Activated CD4-positive, alpha-beta T cell treated with anti-CD3 and anti-CD28 coated beads, Interleukin-2, amount 10 ng/mL, durations not matched to agents 24 days and 14 days (primary cell): ENCODE measurements at regions of chr9 and their contacts with region 1.

Region 1: DNA sequence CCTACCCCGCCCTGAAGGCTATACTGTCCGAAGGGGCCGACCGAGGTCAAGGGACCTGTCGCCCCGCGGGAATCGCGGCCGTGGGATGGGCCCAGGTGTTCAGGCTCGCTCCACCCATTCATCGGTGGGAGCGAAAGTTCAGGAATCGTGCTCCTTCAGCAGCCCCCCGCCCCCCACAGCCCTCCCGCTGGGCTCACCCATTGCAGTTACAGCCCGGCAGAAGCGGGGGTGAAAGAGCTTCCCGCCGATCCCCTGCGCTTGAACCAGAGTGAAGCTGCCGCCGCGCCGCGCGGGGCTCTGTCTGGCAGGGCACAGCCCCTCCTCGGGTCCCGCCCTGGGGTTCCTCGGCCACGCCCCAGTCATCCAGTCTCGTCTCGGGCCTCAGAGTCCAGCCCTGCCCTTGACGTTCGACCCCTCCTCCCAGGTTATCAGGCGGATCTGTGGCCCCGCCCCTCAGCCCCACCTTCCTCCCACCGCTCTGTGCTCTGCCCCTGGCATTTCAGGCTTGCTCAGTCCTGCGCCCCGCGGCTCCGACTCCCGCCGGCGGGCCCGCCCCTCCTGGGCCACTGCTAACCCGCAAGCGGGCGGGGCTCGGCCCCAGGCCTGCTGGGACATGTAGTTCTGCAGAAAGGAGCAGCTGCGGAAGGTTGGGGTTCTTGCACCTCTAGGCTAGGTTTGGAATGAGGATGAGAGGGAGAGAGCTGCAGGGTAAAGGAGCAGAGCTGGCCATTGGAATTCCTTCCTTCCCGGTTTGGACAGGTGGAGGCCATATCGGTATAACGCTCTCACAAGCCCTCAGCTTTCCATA is at the start of gene MYORG:
- DNase-seq: peak; percentile 99
- H3K4me3 Mint-ChIP-seq: peak within 1 kb of the TSS; percentile 89
- H3K27ac Mint-ChIP-seq: peak within 1 kb of the TSS; percentile 78
- H3K4me1 Mint-ChIP-seq: peaks cover 41% of the 10 kb centered on the region
- H3K27me3 Mint-ChIP-seq: peaks cover 4% of the 10 kb centered on the region
- total RNA-seq, gene MYORG: 1.4 TPM in 2 replicates

Region 2: GRCh38 chr9:34048923-34049697 is 327.7 kb before region 1 on chr9:
- intact Hi-C with region 1: loop called (anchors 1 kb)
- DNase-seq: peak; percentile 99
- H3K4me3 Mint-ChIP-seq: peak overlapping the region; percentile 96
- H3K27ac Mint-ChIP-seq: peak overlapping the region; percentile 99
- H3K4me1 Mint-ChIP-seq: peaks cover 41% of the 10 kb centered on the region
- H3K27me3 Mint-ChIP-seq: peaks cover 3% of the 10 kb centered on the region

Region 3: DNA sequence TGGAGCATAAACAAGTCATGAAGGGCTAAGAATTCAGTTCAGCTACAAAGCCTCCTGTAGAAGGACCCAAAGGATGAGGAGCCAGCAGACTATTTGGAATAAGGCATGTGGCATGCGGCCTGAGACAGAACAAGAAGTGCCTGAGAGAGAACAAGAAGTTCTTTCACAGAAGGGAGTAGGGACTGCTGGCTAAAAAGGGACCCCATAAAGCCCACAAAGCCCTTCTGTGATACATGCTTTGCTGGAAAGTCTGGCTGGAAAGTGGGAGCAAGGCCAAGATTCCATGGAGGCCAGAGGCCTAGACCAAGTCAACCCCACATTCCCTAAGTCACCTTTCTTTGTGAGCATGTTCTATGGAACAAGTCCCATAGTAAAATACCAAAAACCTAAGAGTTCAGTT is 292.2 kb before region 1 on chr9:
- intact Hi-C with region 1: no loop called
- DNase-seq: no peak
- H3K4me3 Mint-ChIP-seq: no peak overlapping the region
- H3K27ac Mint-ChIP-seq: no peak overlapping the region
- H3K4me1 Mint-ChIP-seq: peaks cover 12% of the 10 kb centered on the region
- H3K27me3 Mint-ChIP-seq: no peaks in the 10 kb centered on the region

Region 4: GRCh38 chr9:34126207-34127034 is 250.4 kb before region 1 on chr9 and contains the start of gene DCAF12:
- intact Hi-C with region 1: loop called (anchors 2 kb)
- DNase-seq: peak; percentile 98
- H3K4me3 Mint-ChIP-seq: peak within 1 kb of the TSS; percentile 92
- H3K27ac Mint-ChIP-seq: peak within 1 kb of the TSS; percentile 98
- H3K4me1 Mint-ChIP-seq: peaks cover 38% of the 10 kb centered on the region
- H3K27me3 Mint-ChIP-seq: no peaks in the 10 kb centered on the region
- total RNA-seq, gene DCAF12: 45.6 and 51.9 TPM in 2 replicates

Region 5: GRCh38 chr9:34178520-34179212 is 198.1 kb before region 1 on chr9 and contains the start of gene UBAP1:
- intact Hi-C with region 1: loop called (anchors 2 kb)
- DNase-seq: peak; percentile 99
- H3K4me3 Mint-ChIP-seq: peak within 1 kb of the TSS; percentile 92
- H3K27ac Mint-ChIP-seq: peak within 1 kb of the TSS; percentile 96
- H3K4me1 Mint-ChIP-seq: peaks cover 17% of the 10 kb centered on the region
- H3K27me3 Mint-ChIP-seq: no peaks in the 10 kb centered on the region
- total RNA-seq, gene UBAP1: 30.9 and 32.5 TPM in 2 replicates

Region 6: GRCh38 chr9:34252670-34253459 is 123.9 kb before region 1 on chr9:
- intact Hi-C with region 1: loop called (anchors 2 kb)
- DNase-seq: peak; percentile 90
- H3K4me3 Mint-ChIP-seq: no peak overlapping the region
- H3K27ac Mint-ChIP-seq: no peak overlapping the region
- H3K4me1 Mint-ChIP-seq: peaks cover 5% of the 10 kb centered on the region
- H3K27me3 Mint-ChIP-seq: no peaks in the 10 kb centered on the region

Region 7: GRCh38 chr9:34328987-34329832 is 47.6 kb before region 1 on chr9 and contains the starts of genes KIF24 and NUDT2:
- intact Hi-C with region 1: loop called (anchors 1 kb)
- DNase-seq: peak; percentile 99
- H3K4me3 Mint-ChIP-seq: peak within 1 kb of the TSS; percentile 89
- H3K27ac Mint-ChIP-seq: peak within 1 kb of the TSS; percentile 97
- H3K4me1 Mint-ChIP-seq: peaks cover 32% of the 10 kb centered on the region
- H3K27me3 Mint-ChIP-seq: no peaks in the 10 kb centered on the region
- total RNA-seq, gene KIF24: 5.9 and 6.2 TPM in 2 replicates
- total RNA-seq, gene NUDT2: 30.4 and 31.9 TPM in 2 replicates

Region 8: GRCh38 chr9:34458013-34458958 is 81.5 kb after region 1 on chr9 and contains the starts of genes DNAI1 and FAM219A:
- intact Hi-C with region 1: loop called (anchors 1 kb)
- DNase-seq: peak; percentile 100
- H3K4me3 Mint-ChIP-seq: peak within 1 kb of the TSS; percentile 92
- H3K27ac Mint-ChIP-seq: peak within 1 kb of the TSS; percentile 81
- H3K4me1 Mint-ChIP-seq: peaks cover 41% of the 10 kb centered on the region
- H3K27me3 Mint-ChIP-seq: peaks cover 18% of the 10 kb centered on the region
- total RNA-seq, gene DNAI1: not detected in 2 replicates
- total RNA-seq, gene FAM219A: 13.6 and 16.3 TPM in 2 replicates